WTC11 (cell line): ENCODE measurements at regions of chr1 and their contacts with region 1.

Region 1: DNA sequence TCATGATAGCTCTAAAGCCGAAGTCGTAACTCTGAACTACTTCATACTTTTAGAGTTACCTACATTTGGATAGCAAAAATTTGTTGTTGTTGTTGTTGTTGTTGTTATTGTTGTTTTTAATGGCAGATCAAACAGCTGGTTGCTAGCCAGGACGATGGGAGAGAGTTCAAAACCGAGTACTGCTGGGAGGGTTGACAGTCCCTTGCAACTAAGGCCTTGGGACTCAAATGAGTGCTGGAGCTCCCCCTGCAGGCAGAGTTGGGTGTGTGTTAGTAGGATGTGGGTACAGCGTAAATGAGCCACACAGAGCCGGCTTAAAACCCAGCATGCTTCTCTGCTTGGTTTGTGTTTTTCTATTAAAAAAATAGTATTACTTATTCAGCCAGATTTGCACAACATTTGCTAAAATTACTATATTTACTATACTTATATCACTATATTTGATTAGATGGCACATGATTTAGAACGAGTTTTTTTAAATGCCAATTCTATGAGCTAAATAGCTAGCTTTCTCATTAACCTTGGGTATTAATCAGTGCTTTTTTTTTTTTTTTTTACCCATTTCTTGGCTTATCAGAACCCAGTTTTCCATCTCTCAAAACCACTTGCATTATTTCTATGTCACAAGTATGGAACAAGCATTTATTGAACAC is 129.2 kb upstream of the SYT6 start:
- DNase-seq: peak; percentile 91
- ATAC-seq: peak; percentile 100
- H3K4me3 Mint-ChIP-seq: no peak overlapping the region
- H3K27ac Mint-ChIP-seq: no peak overlapping the region
- H3K4me1 Mint-ChIP-seq: peaks cover 14% of the 10 kb centered on the region
- H3K27me3 Mint-ChIP-seq: peaks cover 2% of the 10 kb centered on the region; the same call in 1 of the 2 replicates
- CTCF ChIP-seq: peak; percentile 75

Region 2: DNA sequence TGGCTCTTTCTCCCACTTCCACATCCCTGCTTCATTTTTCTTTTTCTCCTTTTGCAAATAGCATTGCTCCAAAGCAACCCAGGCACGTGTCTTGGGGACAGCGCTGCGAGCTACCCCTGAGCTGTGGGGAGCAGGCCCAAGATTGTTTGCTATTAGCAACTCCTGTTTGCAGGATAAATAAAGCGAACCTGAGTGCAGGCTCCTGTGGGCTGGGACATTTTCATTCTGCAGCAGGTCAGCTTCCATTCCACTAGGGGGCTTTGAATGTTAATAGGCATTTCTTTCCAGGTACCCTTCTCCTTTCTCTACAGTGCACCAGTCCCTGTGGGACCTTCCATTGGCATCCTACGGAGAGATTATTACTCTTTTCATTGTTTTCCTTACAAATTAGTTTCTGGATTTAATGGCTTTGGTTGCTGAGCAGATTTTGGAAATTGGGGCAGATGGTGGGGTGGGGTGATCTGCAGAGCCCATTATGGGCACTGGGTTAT is 249.6 kb before region 1 on chr1:
- CTCF ChIA-PET with region 1: interaction called, 12 read pairs
- POLR2A ChIA-PET with region 1: no interaction called
- DNase-seq: peak; percentile 56
- ATAC-seq: peak; percentile 69
- H3K4me3 Mint-ChIP-seq: no peak overlapping the region
- H3K27ac Mint-ChIP-seq: no peak overlapping the region
- H3K4me1 Mint-ChIP-seq: peaks cover 26% of the 10 kb centered on the region
- H3K27me3 Mint-ChIP-seq: no peaks in the 10 kb centered on the region
- CTCF ChIP-seq: peak; percentile 58; the same call in 1 of the 2 replicates

Region 3: GRCh38 chr1:114118351-114118990 is 164.4 kb before region 1 on chr1:
- CTCF ChIA-PET with region 1: interaction called, 17 read pairs
- POLR2A ChIA-PET with region 1: no interaction called
- DNase-seq: peak; percentile 63
- ATAC-seq: peak; percentile 77
- H3K4me3 Mint-ChIP-seq: no peak overlapping the region
- H3K27ac Mint-ChIP-seq: peak overlapping the region; percentile 92
- H3K4me1 Mint-ChIP-seq: peaks cover 84% of the 10 kb centered on the region
- H3K27me3 Mint-ChIP-seq: no peaks in the 10 kb centered on the region; the same call in 1 of the 2 replicates
- CTCF ChIP-seq: no peak

Region 4: DNA sequence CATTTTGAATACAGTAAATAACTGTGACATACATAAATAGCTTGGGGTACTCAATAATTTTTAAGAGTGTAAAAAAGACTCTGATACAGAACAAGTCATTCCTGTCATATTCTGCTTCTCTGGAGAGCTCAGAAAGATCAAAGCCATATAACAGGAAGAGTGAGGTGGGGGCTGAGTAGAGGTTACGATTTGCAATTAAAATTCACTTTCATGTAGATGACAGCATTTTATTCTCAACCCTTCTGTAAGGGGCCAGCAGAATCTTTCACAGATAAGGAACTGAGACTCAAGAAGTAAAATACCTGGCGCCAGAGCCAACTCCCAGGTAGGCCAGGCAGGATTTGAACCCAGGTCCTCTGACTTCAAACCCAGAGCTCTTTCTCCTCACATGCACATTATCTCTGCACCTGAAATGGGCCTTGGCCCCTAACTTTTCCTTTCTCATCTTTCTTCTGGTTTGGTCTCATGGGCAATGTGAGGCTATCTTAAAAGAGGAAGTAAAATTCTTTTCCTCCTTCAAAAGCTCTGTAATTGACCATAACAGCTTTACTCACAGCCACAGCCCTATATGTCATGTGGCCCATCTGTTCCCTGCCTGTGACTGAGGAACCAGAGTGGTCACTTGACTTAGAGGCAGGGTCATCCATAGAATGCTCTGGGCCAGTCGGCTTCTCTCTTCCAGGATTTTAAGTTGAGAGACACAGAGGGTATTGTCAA is 48.3 kb before region 1 on chr1:
- CTCF ChIA-PET with region 1: interaction called, 10 read pairs
- POLR2A ChIA-PET with region 1: no interaction called
- DNase-seq: no peak
- ATAC-seq: no peak
- H3K4me3 Mint-ChIP-seq: no peak overlapping the region
- H3K27ac Mint-ChIP-seq: no peak overlapping the region
- H3K4me1 Mint-ChIP-seq: peaks cover 9% of the 10 kb centered on the region
- H3K27me3 Mint-ChIP-seq: peaks cover 16% of the 10 kb centered on the region
- CTCF ChIP-seq: no peak

Region 5: GRCh38 chr1:114270282-114270681 is 12.6 kb before region 1 on chr1:
- CTCF ChIA-PET with region 1: interaction called, 32 read pairs
- POLR2A ChIA-PET with region 1: interaction called, 3 read pairs
- DNase-seq: no peak
- ATAC-seq: no peak
- H3K4me3 Mint-ChIP-seq: no peak overlapping the region
- H3K27ac Mint-ChIP-seq: no peak overlapping the region
- H3K4me1 Mint-ChIP-seq: no peaks in the 10 kb centered on the region
- H3K27me3 Mint-ChIP-seq: peaks cover 43% of the 10 kb centered on the region
- CTCF ChIP-seq: no peak